ENCODE measurements at regions of chr1 and their contacts with region 1.

Region 1: DNA sequence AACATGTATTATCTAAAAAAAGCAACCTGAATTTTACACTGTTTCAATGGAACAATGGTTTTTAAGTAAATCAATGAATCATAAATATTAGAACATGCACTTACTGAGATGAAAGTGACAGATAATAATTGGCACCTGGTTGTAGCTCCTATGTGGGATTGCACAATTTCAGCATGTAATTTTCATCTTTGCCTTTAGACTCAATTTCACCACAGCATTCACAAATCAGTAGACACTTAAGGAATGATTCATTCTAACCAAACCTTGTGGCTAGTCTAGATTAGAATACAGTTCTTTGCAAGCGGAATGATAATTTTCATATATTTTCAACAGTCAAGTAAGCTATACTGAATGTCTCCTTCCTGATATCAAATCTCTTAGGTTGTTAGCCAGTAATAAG is 853.4 kb downstream of the KCNT2 start:
- DNase-seq: no peak
- ATAC-seq: no peak
- H3K4me3 ChIP-seq: no peak overlapping the region
- H3K27ac ChIP-seq: no peak overlapping the region
- H3K4me1 ChIP-seq: no peaks in the 10 kb centered on the region
- H3K27me3 ChIP-seq: no peaks in the 10 kb centered on the region
- CTCF ChIP-seq: no peak
- POLR2A ChIP-seq: no peak

Region 2: GRCh38 chr1:195697130-195697529 is 57.7 kb before region 1 on chr1:
- in situ Hi-C with region 1: no loop called
- intact Hi-C with region 1: no loop called
- DNase-seq: no peak
- ATAC-seq: no peak
- H3K4me3 ChIP-seq: no peak overlapping the region
- H3K27ac ChIP-seq: no peak overlapping the region
- H3K4me1 ChIP-seq: no peaks in the 10 kb centered on the region
- H3K27me3 ChIP-seq: no peaks in the 10 kb centered on the region
- CTCF ChIP-seq: no peak
- POLR2A ChIP-seq: no peak

Region 3: GRCh38 chr1:195789321-195789720 is 34.4 kb after region 1 on chr1:
- in situ Hi-C with region 1: no loop called
- intact Hi-C with region 1: loop called (anchors 2 kb)
- DNase-seq: no peak
- ATAC-seq: no peak
- H3K4me3 ChIP-seq: no peak overlapping the region
- H3K27ac ChIP-seq: no peak overlapping the region
- H3K4me1 ChIP-seq: no peaks in the 10 kb centered on the region
- H3K27me3 ChIP-seq: no peaks in the 10 kb centered on the region
- CTCF ChIP-seq: no peak
- POLR2A ChIP-seq: no peak

Region 4: DNA sequence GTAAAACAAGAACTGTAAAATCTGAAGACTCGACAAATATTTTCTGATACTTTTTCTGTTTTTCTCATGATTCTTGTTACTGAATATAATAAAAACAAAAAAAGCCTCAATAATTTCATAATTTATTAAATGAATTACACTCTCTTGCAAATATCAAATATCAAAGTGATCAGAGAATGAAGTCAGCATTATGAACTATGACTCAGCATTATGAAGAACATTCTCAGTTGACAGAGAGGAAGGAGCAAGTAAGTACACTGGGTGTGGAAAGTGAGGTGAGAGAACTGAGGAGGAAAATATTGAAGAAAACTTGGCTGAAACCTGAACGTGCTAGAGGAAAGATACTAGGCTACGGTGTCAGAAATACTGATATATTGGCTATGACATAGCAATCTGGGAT is 323.8 kb after region 1 on chr1:
- in situ Hi-C with region 1: no loop called
- intact Hi-C with region 1: no loop called
- DNase-seq: no peak
- ATAC-seq: no peak
- H3K4me3 ChIP-seq: no peak overlapping the region
- H3K27ac ChIP-seq: no peak overlapping the region
- H3K4me1 ChIP-seq: no peaks in the 10 kb centered on the region
- H3K27me3 ChIP-seq: no peaks in the 10 kb centered on the region
- CTCF ChIP-seq: no peak
- POLR2A ChIP-seq: no peak